ENCODE measurements at regions of chr6 and their contacts with region 1.

Region 1: GRCh38 chr6:127938701-127939100 is 37.8 kb upstream of the THEMIS start:
- DNase-seq: no peak
- H3K4me3 Mint-ChIP-seq: no peak overlapping the region
- H3K27ac Mint-ChIP-seq: peak overlapping the region; percentile 87
- H3K4me1 Mint-ChIP-seq: peaks cover 51% of the 10 kb centered on the region
- H3K27me3 Mint-ChIP-seq: no peaks in the 10 kb centered on the region

Region 2: GRCh38 chr6:127879685-127880084 is 59.0 kb before region 1 on chr6:
- intact Hi-C with region 1: loop called (anchors 1 kb)
- DNase-seq: no peak
- H3K4me3 Mint-ChIP-seq: peak overlapping the region; percentile 60
- H3K27ac Mint-ChIP-seq: peak overlapping the region; percentile 56
- H3K4me1 Mint-ChIP-seq: peaks cover 65% of the 10 kb centered on the region
- H3K27me3 Mint-ChIP-seq: no peaks in the 10 kb centered on the region

Region 3: DNA sequence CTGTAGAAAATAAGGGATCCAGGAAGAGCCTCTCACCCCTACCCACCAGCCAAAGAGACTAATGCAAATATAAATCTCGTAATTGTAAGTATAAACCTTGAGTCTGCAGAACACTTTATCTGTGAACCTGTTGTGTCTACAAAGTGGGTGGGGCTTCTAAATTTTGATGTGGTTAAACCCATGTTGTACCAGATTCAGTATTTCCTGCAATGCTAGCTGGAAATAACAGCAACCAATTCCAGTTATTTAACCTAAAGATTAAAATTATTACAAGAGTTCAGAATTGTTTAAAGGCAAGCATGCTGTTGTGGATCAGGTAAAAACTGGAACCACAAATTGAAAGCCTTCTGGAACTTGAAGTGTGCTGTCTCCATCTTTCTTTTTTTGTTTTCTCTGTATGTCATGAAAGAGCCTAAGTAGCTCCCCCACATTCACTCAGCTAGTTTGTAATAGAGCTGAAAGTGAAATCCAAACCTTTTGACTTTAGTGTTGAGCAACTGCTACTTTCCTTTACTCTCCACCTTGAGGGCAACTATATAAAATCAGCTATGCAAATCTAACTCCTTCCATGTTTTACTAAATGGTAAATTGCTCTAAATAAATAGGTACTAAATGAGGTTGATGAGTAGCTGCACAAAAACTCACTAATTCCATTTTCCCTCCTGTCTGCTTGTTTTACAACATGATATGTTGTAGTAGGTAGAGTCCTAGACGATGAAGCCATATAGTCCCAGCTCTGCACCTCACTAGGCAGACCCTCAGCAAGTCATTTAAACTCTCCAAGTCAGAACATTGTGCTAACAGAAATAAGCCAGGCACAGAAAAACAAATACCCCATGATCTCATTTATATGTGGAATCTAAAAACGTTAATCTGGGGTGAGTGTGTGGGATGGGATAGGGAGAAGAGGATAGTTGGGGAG is 19.9 kb before region 1 on chr6:
- intact Hi-C with region 1: loop called (anchors 2 kb)
- DNase-seq: no peak
- H3K4me3 Mint-ChIP-seq: peak overlapping the region; percentile 71
- H3K27ac Mint-ChIP-seq: peak overlapping the region; percentile 61
- H3K4me1 Mint-ChIP-seq: peaks cover 67% of the 10 kb centered on the region
- H3K27me3 Mint-ChIP-seq: no peaks in the 10 kb centered on the region

Region 4: DNA sequence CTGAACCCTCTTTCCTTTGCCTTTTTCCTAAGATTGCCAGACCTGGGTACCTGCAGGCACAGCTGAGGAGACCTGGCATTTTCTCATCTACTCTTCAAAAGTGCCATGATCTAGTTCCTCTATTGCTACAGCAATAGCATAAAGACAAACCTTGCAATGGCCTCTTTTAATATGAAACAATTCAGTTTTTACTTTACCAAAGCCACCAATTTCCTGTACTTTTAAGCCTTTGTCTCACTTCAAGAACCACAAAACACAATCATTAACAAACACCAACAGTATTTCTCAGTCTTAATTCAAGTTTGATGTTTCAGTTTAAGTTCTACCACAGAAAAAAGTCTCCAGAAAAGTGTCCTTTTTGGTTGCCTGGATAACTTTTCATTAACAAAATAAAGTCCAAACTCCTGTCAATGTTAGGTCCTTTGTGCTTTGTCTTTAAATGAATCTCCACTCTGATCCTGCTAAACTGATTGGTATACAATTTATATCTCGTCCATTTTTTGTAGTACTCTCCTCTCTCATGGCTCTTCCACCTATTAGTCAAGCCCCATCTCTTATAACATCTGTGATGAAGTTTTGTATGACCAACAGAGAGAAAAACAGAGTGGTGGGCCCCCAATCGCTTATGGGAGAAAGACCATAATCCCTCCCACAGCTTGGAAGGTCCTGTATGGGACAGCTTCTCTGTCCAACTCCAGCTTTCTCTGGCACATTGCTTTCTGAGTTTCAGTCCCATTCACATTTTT is 12.6 kb after region 1 on chr6:
- intact Hi-C with region 1: loop called (anchors 1 kb)
- DNase-seq: no peak
- H3K4me3 Mint-ChIP-seq: peak overlapping the region; percentile 32
- H3K27ac Mint-ChIP-seq: peak overlapping the region; percentile 85
- H3K4me1 Mint-ChIP-seq: peaks cover 43% of the 10 kb centered on the region
- H3K27me3 Mint-ChIP-seq: no peaks in the 10 kb centered on the region

Measured in activated T-helper 1 cell treated with anti-CD3 and anti-CD28 coated beads, Interleukin-12 subunit alpha, Interleukin-12 subunit beta, Interleukin-2, Interleukin-4 antibody, amounts not matched to agents 30 ng/mL and 10 ng/mL and 1 ng/mL, durations not matched to agents 14 hours and 24 hours and 36 hours (primary cell).